HEK293T (cell line): ENCODE measurements at regions of chr5 and their contacts with region 1.

Region 1: DNA sequence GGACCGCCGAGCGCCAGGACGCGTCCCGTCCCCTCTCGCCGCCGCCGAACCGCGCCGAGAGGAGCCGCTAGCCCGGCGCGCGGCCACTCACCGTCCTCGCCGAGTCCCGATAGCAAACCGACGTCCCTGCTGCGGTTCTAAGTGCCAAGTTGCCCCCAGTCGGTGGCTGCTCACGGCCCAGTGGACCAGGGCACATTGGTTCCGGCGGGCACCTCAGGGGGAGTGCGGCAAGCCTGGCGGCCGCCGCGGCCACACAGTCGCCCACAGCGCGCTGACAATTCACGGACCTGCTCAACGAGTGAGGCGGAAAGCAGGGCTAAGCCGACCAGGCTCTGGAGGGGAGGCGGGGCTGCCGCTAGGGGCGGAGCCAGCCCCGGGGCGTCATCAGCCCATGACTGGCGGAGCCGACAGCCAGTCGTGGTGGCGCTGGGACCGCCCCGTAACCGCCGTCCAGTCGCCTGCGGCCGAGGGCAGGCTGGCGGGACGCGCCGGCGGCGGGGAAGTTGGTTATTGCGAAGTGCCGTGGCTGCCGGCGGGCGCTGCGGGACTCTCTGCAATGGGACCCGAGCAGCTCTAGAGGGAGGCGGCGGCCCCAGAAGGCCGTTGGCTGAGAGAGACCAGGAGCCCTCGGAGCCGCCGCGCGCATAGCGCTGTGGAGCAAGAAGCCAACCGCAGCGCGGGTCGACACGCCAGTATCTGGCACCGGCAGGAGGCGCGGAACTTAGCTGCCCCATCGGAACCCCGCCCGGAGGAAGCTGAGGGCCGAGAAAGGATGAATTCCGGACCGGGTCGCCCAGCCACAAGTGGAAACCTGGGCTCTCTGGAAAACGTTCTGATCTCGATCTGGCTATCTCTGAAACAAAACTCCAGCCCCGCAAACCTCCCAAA is at the start of gene MARCHF3:
- DNase-seq: peak; percentile 97

Region 2: GRCh38 chr5:126808521-126808988 is 221.9 kb before region 1 on chr5:
- CTCF ChIA-PET with region 1: interaction called, 10 read pairs
- POLR2A ChIA-PET with region 1: no interaction called
- DNase-seq: peak; percentile 28

Region 3: DNA sequence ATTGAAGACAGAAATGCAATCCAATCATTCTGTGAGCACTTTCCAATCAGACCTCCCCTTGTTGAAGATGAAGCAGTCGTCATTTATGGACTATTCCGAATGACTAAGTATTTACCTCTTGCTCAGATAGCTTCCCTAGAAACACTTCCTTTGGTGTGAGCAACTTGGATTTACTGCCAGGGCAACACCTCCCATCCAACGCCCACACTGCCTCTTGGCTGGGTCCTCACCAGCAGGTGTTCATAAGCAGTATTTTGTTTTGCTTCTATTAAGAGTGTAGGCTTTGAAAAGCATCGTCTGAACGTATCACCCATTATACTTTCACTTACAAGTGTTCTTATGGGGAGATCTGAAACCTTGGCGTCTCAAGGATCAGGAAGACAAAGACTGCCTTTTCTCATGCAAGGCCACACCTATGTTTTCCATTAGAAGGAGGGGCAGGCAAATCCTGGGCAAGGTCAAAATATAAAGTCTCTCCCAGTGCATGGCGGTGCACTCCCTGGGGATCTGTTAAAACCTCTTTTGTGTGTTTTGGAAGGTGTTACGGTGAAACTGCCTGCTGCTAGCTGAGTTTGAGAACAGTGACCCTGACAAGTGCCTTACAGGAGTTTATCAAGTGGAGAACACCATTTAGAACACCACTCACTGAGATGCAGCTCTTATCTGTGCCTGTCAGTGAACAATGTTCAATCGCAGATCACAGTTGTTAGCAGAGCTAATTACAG is 10.5 kb after region 1 on chr5:
- CTCF ChIA-PET with region 1: interaction called, 4 read pairs
- POLR2A ChIA-PET with region 1: interaction called, 12 read pairs
- DNase-seq: no peak